ENCODE measurements at regions of chr4 and their contacts with region 1.

Region 1: GRCh38 chr4:88366460-88366859 is 12.2 kb upstream of the HERC6 start:
- DNase-seq: no peak
- H3K4me3 ChIP-seq: no peak overlapping the region
- H3K27ac ChIP-seq: no peak overlapping the region
- H3K4me1 ChIP-seq: no peaks in the 10 kb centered on the region
- H3K27me3 ChIP-seq: no peaks in the 10 kb centered on the region
- CTCF ChIP-seq: no peak
- EP300 ChIP-seq: no peak
- POLR2A ChIP-seq: no peak

Region 2: GRCh38 chr4:88225232-88226105 is 141.0 kb before region 1 on chr4:
- in situ Hi-C with region 1: no loop called
- intact Hi-C with region 1: loop called (anchors 10 kb)
- DNase-seq: no peak
- H3K4me3 ChIP-seq: no peak overlapping the region
- H3K27ac ChIP-seq: no peak overlapping the region
- H3K4me1 ChIP-seq: peaks cover 0 to 2% (median under 1%) of the 10 kb centered on the region in 4 donors
- H3K27me3 ChIP-seq: no peaks in the 10 kb centered on the region
- CTCF ChIP-seq: no peak
- EP300 ChIP-seq: no peak
- POLR2A ChIP-seq: no peak

Region 3: GRCh38 chr4:88573995-88574394 is 207.5 kb after region 1 on chr4:
- in situ Hi-C with region 1: no loop called
- intact Hi-C with region 1: no loop called
- DNase-seq: no peak
- H3K4me3 ChIP-seq: no peak overlapping the region
- H3K27ac ChIP-seq: no peak overlapping the region
- H3K4me1 ChIP-seq: no peaks in the 10 kb centered on the region
- H3K27me3 ChIP-seq: no peaks in the 10 kb centered on the region
- CTCF ChIP-seq: no peak
- EP300 ChIP-seq: no peak
- POLR2A ChIP-seq: no peak

Measured in transverse colon (tissue), 4 donors.